ENCODE measurements at regions of chr14 and their contacts with region 1.

Region 1: GRCh38 chr14:63717702-63718101 is 10.2 kb downstream of the SGPP1 start:
- DNase-seq: peak; percentile 20
- H3K4me3 ChIP-seq: no peak overlapping the region
- H3K27ac ChIP-seq: no peak overlapping the region
- H3K4me1 ChIP-seq: peaks cover 13% of the 10 kb centered on the region
- H3K27me3 ChIP-seq: no peaks in the 10 kb centered on the region
- CTCF ChIP-seq: no peak

Region 2: DNA sequence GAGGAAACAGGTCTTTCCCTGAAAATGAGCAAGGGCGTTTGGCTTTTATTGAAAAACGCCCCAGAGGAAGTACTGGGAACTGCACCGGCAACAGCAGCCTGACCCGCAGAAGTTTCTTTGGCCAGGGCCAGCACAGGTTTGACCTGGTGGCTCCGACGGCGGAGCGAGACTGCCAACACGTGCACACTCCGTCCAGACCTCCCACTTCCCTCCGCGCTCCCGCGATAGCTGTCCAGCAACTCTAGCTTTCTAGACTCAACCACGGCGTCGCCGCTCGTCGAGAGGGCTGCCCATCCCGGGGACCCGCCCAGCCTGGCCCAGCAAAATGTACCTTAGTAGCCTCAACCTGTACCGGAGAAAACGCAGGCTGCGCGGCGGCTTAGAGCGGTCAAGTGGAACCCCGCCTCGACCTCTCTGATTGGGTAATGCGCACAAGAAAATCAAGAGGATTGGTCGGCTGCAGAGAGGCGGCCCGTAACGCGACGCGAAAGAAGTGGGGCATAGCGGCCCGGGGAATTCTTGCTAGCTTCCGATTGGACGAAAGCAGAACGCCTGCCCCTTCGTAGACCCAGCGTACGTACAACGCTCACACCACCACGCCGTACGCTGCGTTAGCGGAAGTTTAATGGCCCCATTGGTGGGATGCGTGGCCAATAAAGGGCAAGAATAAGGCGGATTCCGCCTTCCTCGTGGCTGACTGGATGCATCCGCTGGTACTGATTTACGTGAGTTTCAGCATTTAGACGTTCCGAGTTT is 76.1 kb before region 1 on chr14 and contains the start of gene WDR89:
- CTCF ChIA-PET with region 1: interaction called, 11 read pairs
- dilution Hi-C with region 1: no loop called
- in situ Hi-C with region 1: no loop called
- intact Hi-C with region 1: no loop called
- DNase-seq: peak; percentile 100
- H3K4me3 ChIP-seq: peak within 1 kb of the TSS; percentile 66 to 91 (median 77)
- H3K27ac ChIP-seq: peak within 1 kb of the TSS; percentile 97
- H3K4me1 ChIP-seq: peaks cover 3% of the 10 kb centered on the region
- H3K27me3 ChIP-seq: no peaks in the 10 kb centered on the region
- CTCF ChIP-seq: peak; percentile 77 to 83
- total RNA-seq, gene WDR89: 10.5 to 13.0 TPM

Region 3: DNA sequence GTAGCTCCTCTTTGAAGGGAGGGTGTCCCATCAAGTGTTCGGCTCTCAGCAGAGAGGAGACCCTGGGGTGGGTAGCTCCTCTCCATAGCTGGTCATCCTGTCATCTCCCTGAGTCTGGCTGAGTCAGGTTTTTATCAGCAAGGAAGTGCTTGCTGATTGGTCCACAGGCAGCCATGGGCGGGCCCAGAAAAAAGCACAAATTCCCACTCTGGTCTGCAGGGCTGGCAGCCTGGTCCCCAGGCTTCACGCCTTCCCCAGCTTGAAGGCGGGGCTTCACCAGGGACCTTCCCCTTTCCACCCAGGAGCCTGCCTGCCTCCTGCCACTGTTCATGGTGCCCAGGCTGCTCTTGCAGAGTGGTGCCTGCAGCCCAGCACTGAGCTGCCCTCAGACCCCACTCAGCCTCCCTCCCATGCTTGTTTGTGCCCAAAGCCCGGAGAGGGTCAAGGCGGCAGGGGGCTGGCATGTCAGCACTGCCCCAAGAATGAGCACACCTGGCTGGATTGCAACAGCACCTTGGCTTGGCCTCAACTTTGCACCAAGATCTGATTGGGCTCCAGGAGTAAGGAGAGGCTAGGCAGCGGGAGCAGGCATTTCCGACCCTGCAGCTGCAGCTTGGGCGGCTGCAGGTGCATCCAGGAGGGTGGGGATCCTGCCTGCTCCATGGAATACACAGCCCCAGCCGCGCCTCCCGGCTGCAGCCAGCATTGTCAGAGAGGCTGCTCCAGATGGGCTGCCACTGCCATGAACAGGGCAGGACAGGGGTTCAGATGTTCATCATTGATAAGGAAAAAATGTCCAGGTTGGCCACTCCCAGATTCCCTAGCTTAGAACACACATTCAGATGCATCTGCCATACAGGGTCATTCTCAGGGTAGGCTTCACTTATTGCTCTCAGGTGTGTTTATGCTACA is 54.0 kb before region 1 on chr14:
- CTCF ChIA-PET with region 1: no interaction called
- dilution Hi-C with region 1: loop called (anchors 5 kb)
- in situ Hi-C with region 1: no loop called
- intact Hi-C with region 1: no loop called
- DNase-seq: no peak
- H3K4me3 ChIP-seq: no peak overlapping the region
- H3K27ac ChIP-seq: no peak overlapping the region
- H3K4me1 ChIP-seq: no peaks in the 10 kb centered on the region
- H3K27me3 ChIP-seq: no peaks in the 10 kb centered on the region
- CTCF ChIP-seq: no peak

Region 4: DNA sequence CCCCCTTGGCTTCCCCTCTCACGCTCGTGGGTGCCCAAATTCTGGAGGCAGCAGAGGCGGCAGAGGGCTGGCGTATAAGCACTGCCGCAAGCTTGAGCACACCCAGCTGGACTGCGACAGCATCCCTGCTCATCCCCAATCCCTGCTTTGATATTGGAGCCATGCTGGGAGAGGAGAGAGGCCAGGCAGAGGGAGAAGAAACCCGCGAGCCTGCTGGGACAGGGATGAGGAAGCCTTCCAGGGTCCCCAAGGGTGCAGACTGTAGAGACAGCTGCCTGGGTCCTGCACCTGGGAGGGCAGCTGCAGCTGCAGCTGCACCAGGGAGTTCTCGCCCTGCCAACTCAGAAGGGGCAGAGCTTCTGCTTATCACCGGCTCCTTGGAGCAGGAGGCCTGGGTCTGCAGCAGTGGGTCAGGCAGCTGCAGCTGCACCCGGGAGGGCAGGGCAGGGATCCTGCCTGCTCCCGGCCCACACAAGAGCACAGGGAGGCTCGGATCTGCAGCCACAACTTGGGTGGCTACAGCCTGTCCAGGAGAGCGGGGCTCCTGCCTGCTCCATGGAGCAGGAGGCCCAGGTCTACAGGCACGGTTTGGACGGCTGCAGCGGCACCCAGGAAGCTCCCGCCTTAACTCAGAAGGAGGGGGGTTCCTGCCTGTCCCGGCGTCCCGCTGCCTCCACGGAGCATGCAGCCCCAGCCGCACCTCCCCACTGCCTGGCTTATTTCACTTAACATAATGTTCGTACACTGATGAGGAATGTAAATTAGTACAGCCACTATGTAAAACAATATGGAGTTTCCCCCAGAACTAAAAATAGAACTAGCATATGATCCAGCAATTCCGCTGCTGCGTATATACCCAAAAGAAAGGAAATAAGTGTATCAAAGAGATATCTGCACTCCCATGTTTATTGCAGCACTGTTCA is 70.6 kb after region 1 on chr14:
- CTCF ChIA-PET with region 1: no interaction called
- dilution Hi-C with region 1: no loop called
- in situ Hi-C with region 1: no loop called
- intact Hi-C with region 1: no loop called
- DNase-seq: no peak
- H3K4me3 ChIP-seq: no peak overlapping the region
- H3K27ac ChIP-seq: no peak overlapping the region
- H3K4me1 ChIP-seq: no peaks in the 10 kb centered on the region
- H3K27me3 ChIP-seq: peaks cover 1% of the 10 kb centered on the region
- CTCF ChIP-seq: no peak